Colonic mucosa (tissue), 4 donors: ENCODE measurements at regions of chr19 and their contacts with region 1.

Region 1: DNA sequence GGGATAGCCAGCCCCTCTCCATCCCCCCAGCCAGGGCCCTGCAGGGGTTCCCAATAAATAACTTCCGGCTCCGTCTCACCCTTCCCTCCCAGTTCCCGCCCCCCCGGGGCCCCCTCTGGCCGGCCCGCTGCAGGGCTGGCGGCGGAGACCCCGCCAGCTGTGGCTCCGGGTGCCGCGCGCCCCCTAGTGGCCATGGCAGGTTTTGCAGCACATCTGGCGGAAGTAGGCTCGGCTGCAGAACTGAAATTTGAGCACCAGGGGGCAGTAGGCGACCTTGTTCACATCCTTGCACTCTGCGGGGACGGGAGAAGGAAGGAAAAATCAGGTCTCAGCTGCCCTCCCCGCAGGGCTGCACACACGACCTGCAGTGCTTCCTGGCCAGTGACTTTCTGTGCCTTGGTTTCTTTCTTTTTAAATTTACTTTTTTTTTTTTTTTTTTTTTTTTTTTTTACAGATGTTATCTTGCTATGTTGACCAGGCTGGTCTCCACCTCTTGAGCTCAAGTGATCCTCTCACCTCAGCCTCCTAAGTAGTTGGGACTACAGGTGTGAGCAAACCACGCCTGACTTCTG is 3.6 kb upstream of the MYO1F start:
- DNase-seq: peak; percentile 85
- H3K4me3 ChIP-seq: no peak overlapping the region
- H3K27ac ChIP-seq: no peak overlapping the region
- H3K4me1 ChIP-seq: no peaks in the 10 kb centered on the region
- H3K27me3 ChIP-seq: no peaks in the 10 kb centered on the region
- CTCF ChIP-seq: peak; percentile 98

Region 2: GRCh38 chr19:8363803-8364771 is 216.7 kb before region 1 on chr19 and contains the start of gene ANGPTL4:
- intact Hi-C with region 1: no loop called
- DNase-seq: peak; percentile 81
- H3K4me3 ChIP-seq: peak within 1 kb of the TSS; percentile 50
- H3K27ac ChIP-seq: peak within 1 kb of the TSS; percentile 73
- H3K4me1 ChIP-seq: peaks cover 17% of the 10 kb centered on the region
- H3K27me3 ChIP-seq: no peaks in the 10 kb centered on the region
- CTCF ChIP-seq: no peak
- total RNA-seq, gene ANGPTL4: 7.7 to 8.1 TPM

Region 3: DNA sequence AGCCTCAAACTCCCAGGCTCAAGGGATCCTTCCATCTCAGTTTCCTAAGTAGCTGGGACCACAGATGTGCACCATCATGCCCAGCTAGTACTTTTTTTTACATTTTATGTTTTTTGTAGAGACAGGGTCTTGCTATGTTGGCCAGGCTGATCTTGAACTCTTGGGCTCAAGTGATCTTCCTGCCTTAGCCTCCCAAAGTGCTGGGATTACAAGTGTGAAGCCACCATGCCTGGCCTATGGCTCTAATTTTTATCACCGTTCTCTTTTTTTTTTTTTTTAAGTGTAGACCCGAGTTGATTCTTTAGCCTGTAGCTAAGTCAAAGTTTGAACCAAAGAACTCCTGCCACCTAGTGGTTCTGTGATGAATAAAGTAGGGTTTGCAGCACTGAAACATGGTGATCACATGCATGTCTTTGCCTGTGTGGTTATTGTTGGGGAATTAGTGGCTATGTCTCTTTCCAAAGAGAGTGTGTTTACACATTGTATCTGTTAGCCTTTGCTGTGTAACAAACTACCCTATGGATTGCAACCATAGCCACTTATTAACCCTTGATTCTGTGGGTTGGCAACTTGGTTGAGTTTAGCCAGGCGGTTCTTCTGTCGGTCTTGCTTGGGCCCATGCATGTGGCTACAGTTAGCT is 61.2 kb after region 1 on chr19:
- intact Hi-C with region 1: loop called (anchors 10 kb)
- DNase-seq: no peak
- H3K4me3 ChIP-seq: no peak overlapping the region
- H3K27ac ChIP-seq: no peak overlapping the region
- H3K4me1 ChIP-seq: no peaks in the 10 kb centered on the region
- H3K27me3 ChIP-seq: no peaks in the 10 kb centered on the region
- CTCF ChIP-seq: peak; percentile 44